BJ (cell line): ENCODE measurements at regions of chrX and their contacts with region 1.

Region 1: GRCh38 chrX:84501798-84502628 is at the start of gene HDX:
- DNase-seq: peak; percentile 42
- H3K4me3 ChIP-seq: peak within 1 kb of the TSS; percentile 60
- H3K27me3 ChIP-seq: no peaks in the 10 kb centered on the region
- CTCF ChIP-seq: no peak
- polyA plus RNA-seq, gene HDX: 1.2 and 2.0 TPM in 2 replicates

Region 2: DNA sequence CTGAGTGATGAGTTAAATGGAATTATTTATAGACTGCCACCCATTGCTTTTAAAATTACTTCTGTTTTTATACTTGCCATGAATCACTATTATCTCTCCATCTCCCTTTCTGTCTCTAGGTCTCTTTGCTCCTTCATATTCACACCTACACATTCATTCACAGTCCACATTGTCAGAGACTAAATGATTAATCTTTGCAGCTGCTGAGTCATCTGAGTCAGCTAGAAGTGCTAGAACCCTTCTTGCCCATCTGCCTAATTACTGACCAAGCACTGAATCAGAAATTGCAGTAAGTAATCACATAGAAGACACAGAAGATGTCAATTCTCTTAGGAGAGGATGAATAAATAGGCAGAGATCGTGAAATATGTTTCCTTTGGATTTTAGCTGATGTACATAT is 282.5 kb before region 1 on chrX:
- CTCF ChIA-PET with region 1: no interaction called
- POLR2A ChIA-PET with region 1: interaction called, 17 read pairs
- DNase-seq: no peak
- H3K4me3 ChIP-seq: no peak overlapping the region
- H3K27me3 ChIP-seq: no peaks in the 10 kb centered on the region
- CTCF ChIP-seq: no peak

Region 3: DNA sequence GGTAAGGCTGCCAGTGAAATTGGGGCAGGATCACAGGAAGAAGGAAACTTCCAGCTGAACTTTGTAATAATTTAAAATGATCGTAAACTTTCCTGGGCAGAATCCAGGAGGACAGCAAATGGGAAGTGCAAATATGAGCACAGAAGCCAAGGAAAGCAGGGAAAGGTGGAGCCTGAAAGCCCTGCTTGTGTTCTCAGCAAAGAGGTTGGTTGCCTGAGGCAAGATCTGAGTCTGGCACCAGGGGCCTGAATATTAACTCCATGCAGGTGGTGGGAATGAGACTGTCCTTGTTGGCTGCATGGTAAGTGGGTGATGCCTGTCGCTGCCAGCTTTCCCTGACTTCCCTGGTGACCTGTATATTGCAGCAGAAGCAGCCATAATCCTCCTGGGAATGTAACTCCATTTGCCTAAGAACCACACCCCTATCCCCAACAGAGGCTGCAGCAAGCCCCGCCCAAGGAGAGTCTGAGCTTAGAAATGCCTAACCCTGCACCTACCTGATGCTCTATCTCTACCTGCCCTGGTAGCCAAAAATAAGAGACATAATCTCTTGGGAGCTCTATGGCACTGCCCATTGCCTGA is 132.3 kb after region 1 on chrX:
- CTCF ChIA-PET with region 1: no interaction called
- POLR2A ChIA-PET with region 1: no interaction called
- DNase-seq: no peak
- H3K4me3 ChIP-seq: no peak overlapping the region
- H3K27me3 ChIP-seq: no peaks in the 10 kb centered on the region
- CTCF ChIP-seq: no peak

Region 4: DNA sequence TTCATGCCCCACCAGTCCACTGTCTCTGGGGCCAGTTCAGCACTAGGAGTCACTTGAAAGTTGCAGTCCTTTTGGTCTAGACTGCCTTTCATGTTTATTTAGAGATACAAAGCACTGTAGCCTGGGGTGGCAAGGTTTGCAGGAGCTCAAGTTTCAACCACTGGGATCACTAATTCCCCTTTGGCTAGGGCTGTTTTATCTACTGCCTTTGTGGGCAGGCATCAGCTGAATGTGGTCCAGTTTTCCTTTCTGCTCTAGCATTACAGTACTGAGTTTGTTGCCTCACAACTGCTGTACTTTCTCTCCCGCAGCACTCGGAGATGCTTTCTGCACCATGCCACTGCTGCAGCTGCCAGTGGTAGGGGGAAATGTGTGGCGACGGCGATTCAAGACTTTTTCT is 222.6 kb after region 1 on chrX:
- CTCF ChIA-PET with region 1: no interaction called
- POLR2A ChIA-PET with region 1: no interaction called
- DNase-seq: no peak
- H3K4me3 ChIP-seq: no peak overlapping the region
- H3K27me3 ChIP-seq: no peaks in the 10 kb centered on the region
- CTCF ChIP-seq: no peak

Region 5: DNA sequence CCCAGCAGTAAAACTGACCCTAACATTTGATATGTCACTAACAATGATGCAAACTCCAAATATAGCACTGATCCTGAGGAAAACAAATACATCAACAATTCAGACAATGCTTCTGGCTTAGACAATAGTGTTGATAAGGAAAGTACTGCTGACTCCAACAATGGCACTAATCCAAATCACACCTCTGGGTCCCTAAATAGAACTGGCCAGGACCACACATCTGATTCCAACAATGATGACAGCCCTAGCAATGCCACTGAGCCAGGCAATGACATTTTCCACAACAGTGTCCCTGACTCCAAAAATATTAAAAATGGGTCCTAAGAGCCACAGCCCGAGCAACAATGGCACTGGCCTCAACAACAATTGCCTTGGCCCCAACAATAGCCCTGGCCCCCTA is 258.5 kb after region 1 on chrX:
- CTCF ChIA-PET with region 1: no interaction called
- POLR2A ChIA-PET with region 1: no interaction called
- DNase-seq: no peak
- H3K4me3 ChIP-seq: no peak overlapping the region
- H3K27me3 ChIP-seq: no peaks in the 10 kb centered on the region
- CTCF ChIP-seq: no peak